HCT116 (cell line): ENCODE measurements at regions of chr11 and their contacts with region 1.

Region 1: DNA sequence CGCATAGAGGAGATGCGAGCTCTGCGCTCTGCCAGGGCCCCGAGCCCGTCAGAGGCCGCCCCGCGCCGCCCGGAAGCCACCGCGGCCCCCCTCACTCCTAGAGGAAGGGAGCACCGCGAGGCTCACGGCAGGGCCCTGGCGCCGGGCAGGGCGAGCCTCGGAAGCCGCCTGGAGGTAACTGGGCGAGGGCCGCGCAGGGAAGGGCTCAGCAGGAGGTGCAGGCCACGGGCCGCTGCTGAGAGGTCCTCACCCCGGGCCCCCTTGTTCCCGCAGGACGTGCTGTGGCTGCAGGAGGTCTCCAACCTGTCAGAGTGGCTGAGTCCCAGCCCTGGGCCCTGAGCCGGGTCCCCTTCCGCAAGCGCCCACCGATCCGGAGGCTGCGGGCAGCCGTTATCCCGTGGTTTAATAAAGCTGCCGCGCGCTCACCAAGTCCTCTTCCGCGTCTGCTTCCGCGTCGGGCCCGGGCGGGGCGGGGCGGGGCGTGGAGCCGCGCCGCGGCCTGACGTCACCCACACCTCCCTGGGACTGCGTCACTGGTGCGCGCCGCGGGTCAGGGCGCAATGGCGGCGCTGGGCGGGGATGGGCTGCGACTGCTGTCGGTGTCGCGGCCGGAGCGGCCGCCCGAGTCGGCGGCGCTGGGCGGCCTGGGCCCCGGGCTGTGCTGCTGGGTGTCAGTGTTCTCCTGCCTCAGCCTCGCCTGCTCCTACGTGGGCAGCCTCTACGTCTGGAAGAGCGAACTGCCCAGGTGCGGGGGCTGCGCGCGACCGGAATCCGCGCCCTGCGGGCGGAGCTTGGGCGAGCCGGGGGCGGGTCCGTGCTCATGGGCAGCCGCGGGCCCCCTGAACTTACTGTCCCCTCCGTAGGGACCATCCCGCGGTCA is at the start of gene RCE1:
- DNase-seq: peak; percentile 65
- ATAC-seq: peak; percentile 86
- H3K4me3 ChIP-seq: peak within 1 kb of the TSS; percentile 86 to 91
- H3K27ac ChIP-seq: peak within 1 kb of the TSS; percentile 96
- H3K4me1 ChIP-seq: peaks cover 7 to 20% of the 10 kb centered on the region in 2 experiments; a peak in 3 of 4 replicates
- H3K27me3 ChIP-seq: no peaks in the 10 kb centered on the region
- CTCF ChIP-seq: no peak
- POLR2A ChIP-seq: peak; percentile 57
- RAD21 ChIP-seq: no peak
- total RNA-seq, gene RCE1: 35.3 TPM

Region 2: DNA sequence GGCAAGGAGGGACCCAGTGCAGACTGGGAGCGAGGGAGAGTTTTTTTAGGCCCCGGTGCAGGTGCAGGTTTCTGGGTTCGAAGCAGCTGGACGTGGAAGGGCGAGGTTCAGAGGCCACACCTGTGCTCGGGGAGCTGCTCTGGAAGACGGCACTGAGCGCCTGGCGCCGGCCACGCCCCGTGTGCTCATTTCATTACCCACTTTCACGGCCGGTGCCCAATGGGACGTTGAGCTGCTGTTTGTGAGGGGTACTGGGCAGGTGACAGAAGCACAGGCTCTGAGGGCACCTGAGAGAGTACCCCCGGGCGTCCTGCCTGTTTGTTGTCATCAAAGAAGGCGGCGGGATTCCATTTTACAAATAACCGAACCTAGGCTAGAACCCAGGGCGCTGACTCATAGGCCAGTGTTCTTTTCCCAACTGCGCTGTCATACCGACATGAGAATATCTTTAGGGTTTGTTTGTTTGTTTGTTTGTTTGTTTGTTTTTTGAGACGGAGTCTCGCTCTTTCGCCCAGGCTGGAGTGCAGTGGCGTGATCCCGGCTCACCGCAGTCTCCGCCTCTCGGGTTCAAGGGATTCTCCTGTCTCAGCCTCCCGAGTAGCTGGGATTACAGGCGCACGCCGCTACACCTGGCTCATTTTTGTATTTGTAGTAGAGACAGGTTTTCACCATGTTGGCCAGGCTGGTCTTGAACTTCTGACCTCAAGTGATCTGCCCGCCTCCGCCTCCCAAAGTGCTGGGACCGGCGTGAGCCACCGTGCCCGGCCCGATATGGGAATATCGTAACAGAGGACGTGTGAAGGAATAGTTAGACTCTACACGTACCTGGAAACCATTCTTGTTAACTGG is 97.6 kb before region 1 on chr11:
- CTCF ChIA-PET with region 1: no interaction called
- POLR2A ChIA-PET with region 1: no interaction called
- RAD21 ChIA-PET with region 1: no interaction called
- intact Hi-C with region 1: no loop called
- DNase-seq: no peak
- ATAC-seq: peak; percentile 77
- H3K4me3 ChIP-seq: peak overlapping the region; percentile 74 to 89
- H3K27ac ChIP-seq: peak overlapping the region; percentile 85
- H3K4me1 ChIP-seq: peaks cover 8 to 28% of the 10 kb centered on the region in 2 experiments
- H3K27me3 ChIP-seq: no peaks in the 10 kb centered on the region
- CTCF ChIP-seq: no peak
- POLR2A ChIP-seq: no peak
- RAD21 ChIP-seq: no peak

Region 3: GRCh38 chr11:66976048-66976467 is 132.9 kb after region 1 on chr11:
- CTCF ChIA-PET with region 1: interaction called, 9 read pairs
- POLR2A ChIA-PET with region 1: no interaction called
- RAD21 ChIA-PET with region 1: no interaction called
- intact Hi-C with region 1: loop called (anchors 5 kb)
- DNase-seq: no peak
- ATAC-seq: peak; percentile 57
- H3K4me3 ChIP-seq: no peak overlapping the region
- H3K27ac ChIP-seq: no peak overlapping the region
- H3K4me1 ChIP-seq: peaks cover 5 to 39% of the 10 kb centered on the region in 2 experiments
- H3K27me3 ChIP-seq: no peaks in the 10 kb centered on the region
- CTCF ChIP-seq: peak; percentile 58 to 87 (median 76); a peak in 5 of 6 replicates
- POLR2A ChIP-seq: no peak
- RAD21 ChIP-seq: peak; percentile 91